ENCODE measurements at regions of chr2 and their contacts with region 1.

Region 1: GRCh38 chr2:96265840-96266679 is at the starts of genes CIAO1 and TMEM127:
- DNase-seq: peak; percentile 99
- H3K4me3 ChIP-seq: peak within 1 kb of the TSS; percentile 93
- H3K27ac ChIP-seq: peak within 1 kb of the TSS; percentile 76
- H3K4me1 ChIP-seq: peaks cover 37% of the 10 kb centered on the region
- H3K27me3 ChIP-seq: no peaks in the 10 kb centered on the region
- CTCF ChIP-seq: no peak
- total RNA-seq, gene CIAO1: 56.0 to 75.5 TPM
- total RNA-seq, gene TMEM127: 61.9 to 81.1 TPM

Region 2: GRCh38 chr2:96024336-96025193 is 241.5 kb before region 1 on chr2:
- intact Hi-C with region 1: loop called (anchors 10 kb)
- DNase-seq: no peak
- H3K4me3 ChIP-seq: no peak overlapping the region
- H3K27ac ChIP-seq: no peak overlapping the region
- H3K4me1 ChIP-seq: no peaks in the 10 kb centered on the region
- H3K27me3 ChIP-seq: no peaks in the 10 kb centered on the region
- CTCF ChIP-seq: no peak

Region 3: DNA sequence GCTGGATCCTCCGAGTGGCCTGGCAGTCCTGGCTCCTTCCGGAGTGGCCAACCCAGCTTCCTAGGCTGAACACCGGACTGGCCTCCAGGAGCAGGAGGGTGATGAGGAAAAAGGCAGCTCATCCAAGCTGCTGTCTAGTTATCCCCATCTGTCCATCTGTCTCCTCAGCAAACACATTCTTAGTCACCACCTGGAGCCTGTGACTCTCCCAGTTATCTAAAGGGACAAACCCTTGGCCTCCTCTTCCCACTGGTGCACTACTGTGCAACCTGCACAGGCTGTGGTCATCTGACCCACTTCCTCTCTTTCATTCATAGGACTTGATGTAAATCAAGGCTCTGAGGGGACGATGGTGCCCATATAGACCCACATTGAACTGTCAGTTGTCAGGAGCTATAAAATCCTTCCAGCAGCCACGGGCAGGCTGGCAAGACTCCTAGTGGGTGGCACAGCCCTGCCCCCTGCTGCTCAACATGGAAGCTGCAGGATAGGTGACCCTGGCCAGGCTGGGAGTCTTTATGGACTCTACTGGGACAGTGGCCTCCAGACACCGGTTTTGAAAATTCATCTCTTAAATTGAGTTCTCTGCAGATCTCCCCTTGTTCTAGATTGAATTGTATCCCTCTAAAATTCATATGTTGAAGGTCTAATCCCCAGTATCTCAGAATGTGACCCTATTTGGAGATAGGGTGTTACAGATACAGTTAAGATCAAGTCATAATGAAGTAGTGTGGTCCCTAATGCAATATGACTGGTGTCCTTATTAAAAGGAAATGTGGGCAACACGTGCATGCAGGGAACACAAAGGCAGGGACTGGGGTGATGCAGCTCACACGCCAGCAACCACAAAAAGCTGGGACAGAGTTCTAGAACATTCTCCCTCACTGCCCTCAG is 91.6 kb before region 1 on chr2:
- intact Hi-C with region 1: no loop called
- DNase-seq: peak; percentile 86
- H3K4me3 ChIP-seq: no peak overlapping the region
- H3K27ac ChIP-seq: no peak overlapping the region
- H3K4me1 ChIP-seq: no peaks in the 10 kb centered on the region
- H3K27me3 ChIP-seq: no peaks in the 10 kb centered on the region
- CTCF ChIP-seq: peak; percentile 95

Region 4: DNA sequence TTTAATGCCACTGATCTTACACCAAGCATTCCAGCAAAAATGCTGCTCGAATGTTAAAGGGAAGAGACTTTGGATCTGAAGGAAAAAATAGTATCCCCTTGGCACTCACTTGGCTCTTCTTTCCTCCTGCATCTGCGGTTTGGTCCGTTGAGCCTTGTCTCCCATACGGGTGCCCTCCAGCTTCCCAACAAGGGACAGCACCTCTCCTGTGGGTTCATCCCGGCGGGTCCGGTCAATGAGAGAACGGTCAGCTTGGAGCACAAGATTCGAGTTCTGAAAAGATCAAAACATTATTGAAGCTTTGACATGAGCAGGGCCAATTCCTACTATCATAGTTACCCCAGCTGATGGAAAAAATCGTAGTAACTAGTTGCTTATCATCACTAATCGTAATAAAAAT is 38.5 kb after region 1 on chr2:
- intact Hi-C with region 1: loop called (anchors 5 kb)
- DNase-seq: no peak
- H3K4me3 ChIP-seq: peak overlapping the region; percentile 72
- H3K27ac ChIP-seq: peak overlapping the region; percentile 71
- H3K4me1 ChIP-seq: peaks cover 12% of the 10 kb centered on the region
- H3K27me3 ChIP-seq: no peaks in the 10 kb centered on the region
- CTCF ChIP-seq: no peak

Region 5: DNA sequence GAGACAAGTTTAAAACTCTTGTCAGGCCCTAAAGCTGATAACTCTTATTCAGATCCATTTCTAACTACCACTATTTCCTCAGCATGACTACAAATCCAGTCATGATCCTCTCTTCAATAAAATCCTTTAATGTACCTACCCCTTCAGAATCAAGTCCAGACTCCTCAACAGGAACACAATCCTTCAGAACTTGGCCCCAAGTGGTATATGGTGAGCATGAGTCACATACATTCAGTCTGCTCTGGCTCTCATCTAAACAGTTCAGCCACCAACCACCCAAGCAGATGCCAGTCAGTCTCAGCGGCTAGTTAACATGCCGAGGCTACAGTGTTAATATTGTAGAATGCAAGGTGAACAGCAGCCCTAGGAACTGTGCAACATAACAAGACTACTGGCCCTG is 464.2 kb after region 1 on chr2:
- intact Hi-C with region 1: no loop called
- DNase-seq: no peak
- H3K4me3 ChIP-seq: no peak overlapping the region
- H3K27ac ChIP-seq: no peak overlapping the region
- H3K4me1 ChIP-seq: no peaks in the 10 kb centered on the region
- H3K27me3 ChIP-seq: no peaks in the 10 kb centered on the region
- CTCF ChIP-seq: no peak

Measured in colonic mucosa (tissue), 4 donors.